GM10248 (cell line): ENCODE measurements at regions of chr5 and their contacts with region 1.

Region 1: GRCh38 chr5:132495667-132496190 is 5.2 kb upstream of the IRF1 start:
- DNase-seq: peak; percentile 83
- CTCF ChIP-seq: peak; percentile 0

Region 2: DNA sequence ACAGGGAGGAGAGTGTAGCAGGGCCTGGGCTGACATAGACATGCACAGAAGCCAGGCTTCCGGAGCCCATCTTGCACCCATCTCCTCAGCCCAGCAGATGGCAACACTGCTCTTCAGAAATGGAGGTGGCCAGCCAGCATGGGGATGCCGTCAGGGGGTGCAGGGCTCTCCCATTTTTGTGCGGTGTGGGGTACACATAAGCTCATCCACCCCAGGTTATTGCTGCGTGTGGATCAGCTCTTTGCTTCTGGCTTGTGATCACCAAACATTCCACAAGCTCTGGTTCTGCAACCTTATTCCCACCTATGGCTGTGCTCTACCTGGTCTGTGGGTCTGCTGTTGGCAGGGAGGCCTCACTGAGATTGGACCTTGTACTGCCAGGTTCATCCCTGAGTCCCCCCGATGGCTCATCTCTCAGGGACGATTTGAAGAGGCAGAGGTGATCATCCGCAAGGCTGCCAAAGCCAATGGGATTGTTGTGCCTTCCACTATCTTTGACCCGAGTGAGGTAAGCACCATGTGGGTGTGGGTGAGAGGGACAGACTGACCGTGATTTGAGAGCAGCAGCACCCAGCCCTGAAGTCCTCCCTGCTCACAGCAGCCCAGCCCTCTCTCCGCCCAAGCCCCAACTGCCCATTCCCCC is 109.0 kb before region 1 on chr5:
- CTCF ChIA-PET with region 1: interaction called, 255 read pairs
- POLR2A ChIA-PET with region 1: no interaction called
- DNase-seq: peak; percentile 87
- CTCF ChIP-seq: peak; percentile 89

Region 3: GRCh38 chr5:132419502-132420468 is 75.9 kb before region 1 on chr5:
- CTCF ChIA-PET with region 1: interaction called, 82 read pairs
- POLR2A ChIA-PET with region 1: interaction called, 59 read pairs
- DNase-seq: peak; percentile 73
- CTCF ChIP-seq: peak; percentile 86

Region 4: DNA sequence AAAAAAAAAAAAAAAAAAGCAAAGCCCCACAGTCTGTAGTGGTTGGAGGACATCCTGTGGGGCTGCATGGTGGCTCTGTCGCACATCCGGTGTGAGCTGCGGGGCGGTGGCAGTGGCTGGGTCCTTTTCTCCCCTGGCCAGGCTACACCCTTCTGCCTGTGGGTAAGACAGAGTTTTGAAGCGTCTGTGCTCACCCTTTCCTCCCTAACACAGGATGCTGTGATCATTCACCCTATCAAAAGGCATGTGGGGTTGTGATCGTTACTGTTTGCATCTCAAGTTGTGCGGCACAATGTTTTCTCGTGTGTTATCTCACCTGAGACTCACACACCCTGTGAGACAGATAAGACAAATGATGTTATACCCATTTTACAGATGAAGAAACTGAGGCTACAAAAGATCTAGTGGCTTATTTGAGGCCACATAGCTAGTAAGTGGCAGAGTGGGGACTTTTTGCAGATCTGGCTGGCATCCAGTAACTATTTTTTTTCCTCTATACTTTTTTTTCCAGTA is 22.7 kb before region 1 on chr5:
- CTCF ChIA-PET with region 1: interaction called, 62 read pairs
- POLR2A ChIA-PET with region 1: interaction called, 132 read pairs
- DNase-seq: peak; percentile 73
- CTCF ChIP-seq: no peak

Region 5: GRCh38 chr5:132479111-132479951 is 16.4 kb before region 1 on chr5:
- CTCF ChIA-PET with region 1: interaction called, 62 read pairs
- POLR2A ChIA-PET with region 1: interaction called, 132 read pairs
- DNase-seq: no peak
- CTCF ChIP-seq: no peak

Region 6: DNA sequence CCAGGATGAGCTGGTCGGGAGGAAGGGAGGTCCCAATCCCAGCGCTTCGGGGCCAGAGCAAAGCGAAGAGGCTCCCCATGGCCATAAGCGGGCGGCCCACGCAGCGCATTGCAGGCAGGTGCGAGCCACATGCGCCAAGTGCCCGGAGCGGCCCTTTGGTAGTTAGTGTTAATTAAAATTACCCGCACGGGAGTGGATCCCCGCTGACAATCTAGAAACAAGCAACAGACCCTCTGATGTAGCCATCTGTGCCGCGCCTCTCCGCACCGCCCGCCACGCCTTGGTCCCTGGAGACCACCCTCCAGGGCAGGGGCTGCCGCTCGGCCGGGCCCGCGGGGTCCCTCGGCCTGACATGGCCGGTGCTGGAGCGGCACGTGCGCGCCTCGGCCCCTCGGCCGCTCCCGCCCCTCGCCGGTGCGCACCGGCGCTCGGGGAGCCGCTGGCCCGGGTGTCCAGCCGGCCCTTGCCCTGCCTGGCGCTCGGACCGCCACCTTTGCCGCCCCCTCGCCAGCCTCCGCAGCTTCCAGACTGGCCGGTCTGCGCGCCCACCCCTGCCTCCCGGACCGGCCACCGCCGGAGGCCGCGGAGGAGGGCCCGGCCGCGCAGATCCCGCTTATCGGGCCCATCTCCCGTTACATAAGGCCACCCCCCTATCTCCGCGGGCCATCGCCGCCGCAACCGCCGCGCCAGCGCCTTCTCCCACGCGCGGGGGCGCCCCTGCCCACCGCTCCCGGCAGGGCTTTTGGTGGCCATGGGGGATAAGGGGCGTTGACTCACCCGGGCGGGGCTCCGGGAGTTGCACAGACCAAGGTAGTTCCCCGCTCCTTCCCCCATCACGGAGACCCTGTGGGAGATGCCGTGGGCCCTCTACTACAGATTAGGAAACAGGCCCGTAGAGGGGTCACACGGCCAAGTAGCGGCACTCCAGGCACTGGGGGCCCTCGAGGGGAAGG is 160.4 kb after region 1 on chr5:
- CTCF ChIA-PET with region 1: no interaction called
- POLR2A ChIA-PET with region 1: no interaction called
- DNase-seq: peak; percentile 54
- CTCF ChIP-seq: peak; percentile 52